Heart right ventricle (tissue), 16 donors: ENCODE measurements at regions of chr6 and their contacts with region 1.

Region 1: DNA sequence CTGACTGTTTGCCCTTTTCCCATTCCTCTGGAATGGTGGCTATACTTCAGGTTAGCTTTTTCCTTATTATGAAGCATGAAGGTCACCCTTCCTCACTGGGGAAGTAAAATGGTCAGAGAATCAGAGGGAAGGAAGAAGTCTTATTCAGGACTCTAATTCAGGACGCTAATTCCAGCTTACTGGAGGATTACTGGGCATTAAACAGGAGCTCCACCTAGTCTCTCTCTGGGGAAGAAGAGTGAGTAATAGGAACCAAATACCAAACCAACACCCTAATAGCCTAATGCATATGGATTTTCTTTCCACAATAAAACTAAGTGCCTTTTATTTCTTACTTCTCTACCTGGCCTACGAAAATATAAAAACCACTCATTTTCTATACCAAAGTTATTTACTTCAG is 10.1 kb downstream of the CRISP1 start:
- DNase-seq: no peak
- ATAC-seq: no peak
- H3K4me3 ChIP-seq: no peak overlapping the region
- H3K27ac ChIP-seq: no peak overlapping the region
- H3K4me1 ChIP-seq: no peaks in the 10 kb centered on the region
- H3K27me3 ChIP-seq: peaks cover 0 to 5% (median 0%) of the 10 kb centered on the region in 7 donors
- CTCF ChIP-seq: no peak

Region 2: DNA sequence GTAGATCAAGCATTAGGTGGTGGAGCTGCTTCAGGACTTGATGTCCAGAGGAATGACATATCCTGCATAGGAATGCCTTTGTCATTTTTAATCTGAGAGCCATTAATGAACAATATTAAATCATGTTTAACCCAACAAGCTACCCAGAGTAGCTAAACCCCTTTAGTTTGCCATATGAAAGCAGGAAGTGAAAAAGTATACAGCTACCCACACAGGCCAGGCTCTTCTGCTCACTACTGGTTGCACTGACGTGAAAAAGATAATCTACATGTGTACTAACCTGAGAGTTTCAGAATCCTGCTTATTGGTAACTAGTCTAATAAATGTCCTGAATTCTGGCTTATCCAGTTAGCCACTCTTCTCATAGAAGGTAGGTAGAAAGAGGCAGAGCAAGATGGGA is 336.6 kb before region 1 on chr6:
- intact Hi-C with region 1: loop called in 1 of 10 experiments (anchors 10 kb)
- DNase-seq: no peak
- ATAC-seq: no peak
- H3K4me3 ChIP-seq: no peak overlapping the region
- H3K27ac ChIP-seq: no peak overlapping the region
- H3K4me1 ChIP-seq: no peaks in the 10 kb centered on the region
- H3K27me3 ChIP-seq: peaks cover 0 to 10% (median 0%) of the 10 kb centered on the region in 7 donors
- CTCF ChIP-seq: no peak

Region 3: GRCh38 chr6:49531774-49532569 is 324.3 kb before region 1 on chr6:
- intact Hi-C with region 1: loop called in 4 of 10 experiments (anchors 2 to 10 kb)
- DNase-seq: no peak
- ATAC-seq: peak in 5 of 8 donors; percentile 23 to 67 (median 47)
- H3K4me3 ChIP-seq: peak overlapping the region in 3 of 10 donors; percentile 21 to 27 (median 27)
- H3K27ac ChIP-seq: no peak overlapping the region
- H3K4me1 ChIP-seq: no peaks in the 10 kb centered on the region
- H3K27me3 ChIP-seq: peaks cover 0 to 10% (median 0%) of the 10 kb centered on the region in 7 donors
- CTCF ChIP-seq: peak; percentile 42 to 94 (median 78)

Region 4: GRCh38 chr6:49625140-49625539 is 231.1 kb before region 1 on chr6:
- intact Hi-C with region 1: loop called in 1 of 10 experiments (anchors 5 kb)
- DNase-seq: no peak
- ATAC-seq: no peak
- H3K4me3 ChIP-seq: no peak overlapping the region
- H3K27ac ChIP-seq: no peak overlapping the region
- H3K4me1 ChIP-seq: no peaks in the 10 kb centered on the region
- H3K27me3 ChIP-seq: peaks cover 0 to 5% (median 0%) of the 10 kb centered on the region in 7 donors
- CTCF ChIP-seq: no peak

Region 5: GRCh38 chr6:49766762-49767161 is 89.5 kb before region 1 on chr6:
- intact Hi-C with region 1: no loop called
- DNase-seq: no peak
- ATAC-seq: no peak
- H3K4me3 ChIP-seq: no peak overlapping the region
- H3K27ac ChIP-seq: no peak overlapping the region
- H3K4me1 ChIP-seq: no peaks in the 10 kb centered on the region
- H3K27me3 ChIP-seq: no peaks in the 10 kb centered on the region
- CTCF ChIP-seq: no peak

Region 6: GRCh38 chr6:49892280-49892679 is 36.0 kb after region 1 on chr6:
- intact Hi-C with region 1: no loop called
- DNase-seq: no peak
- ATAC-seq: no peak
- H3K4me3 ChIP-seq: no peak overlapping the region
- H3K27ac ChIP-seq: no peak overlapping the region
- H3K4me1 ChIP-seq: no peaks in the 10 kb centered on the region
- H3K27me3 ChIP-seq: peaks cover 0 to 8% (median 0%) of the 10 kb centered on the region in 7 donors
- CTCF ChIP-seq: no peak